ENCODE measurements at regions of chr14 and their contacts with region 1.

Region 1: GRCh38 chr14:94423453-94424056 is 29.0 kb downstream of the SERPINA11 start:
- DNase-seq: peak; percentile 56
- H3K4me3 ChIP-seq: no peak overlapping the region
- H3K27ac ChIP-seq: no peak overlapping the region
- H3K4me1 ChIP-seq: no peaks in the 10 kb centered on the region
- CTCF ChIP-seq: peak; percentile 90

Region 2: DNA sequence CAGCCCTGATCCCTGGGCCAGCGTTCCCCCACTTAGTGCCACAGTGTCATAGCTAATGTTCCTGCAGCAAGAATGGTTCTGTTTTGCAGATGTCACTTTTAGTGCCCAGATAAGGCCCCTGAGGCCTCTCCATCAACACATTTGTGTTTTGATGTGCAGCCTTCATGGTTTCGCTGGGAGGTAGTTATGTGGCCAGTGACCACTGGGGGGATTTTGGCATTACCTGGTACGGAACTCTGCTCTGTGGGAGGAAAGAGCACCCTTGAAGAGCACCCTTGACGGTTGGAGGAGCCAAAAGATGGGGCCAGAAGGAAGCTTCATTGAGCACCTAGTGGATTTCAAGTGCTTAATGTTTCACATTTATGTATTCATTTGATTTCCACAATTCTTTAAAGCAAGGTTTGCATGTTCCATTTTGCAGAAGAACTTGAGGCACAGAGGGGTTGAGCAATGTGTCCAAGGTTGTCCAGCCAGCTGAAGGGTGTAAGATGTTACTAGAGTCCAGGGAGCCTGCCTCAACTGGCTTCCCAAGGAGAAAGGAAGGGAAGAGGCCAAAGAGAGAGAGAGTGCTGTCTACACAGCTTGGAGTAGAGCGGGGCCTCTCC is 16.0 kb after region 1 on chr14:
- CTCF ChIA-PET with region 1: no interaction called
- POLR2A ChIA-PET with region 1: no interaction called
- intact Hi-C with region 1: no loop called
- DNase-seq: no peak
- H3K4me3 ChIP-seq: no peak overlapping the region
- H3K27ac ChIP-seq: no peak overlapping the region
- H3K4me1 ChIP-seq: no peaks in the 10 kb centered on the region
- CTCF ChIP-seq: peak; percentile 41; the same call in 1 of the 2 replicates

Region 3: DNA sequence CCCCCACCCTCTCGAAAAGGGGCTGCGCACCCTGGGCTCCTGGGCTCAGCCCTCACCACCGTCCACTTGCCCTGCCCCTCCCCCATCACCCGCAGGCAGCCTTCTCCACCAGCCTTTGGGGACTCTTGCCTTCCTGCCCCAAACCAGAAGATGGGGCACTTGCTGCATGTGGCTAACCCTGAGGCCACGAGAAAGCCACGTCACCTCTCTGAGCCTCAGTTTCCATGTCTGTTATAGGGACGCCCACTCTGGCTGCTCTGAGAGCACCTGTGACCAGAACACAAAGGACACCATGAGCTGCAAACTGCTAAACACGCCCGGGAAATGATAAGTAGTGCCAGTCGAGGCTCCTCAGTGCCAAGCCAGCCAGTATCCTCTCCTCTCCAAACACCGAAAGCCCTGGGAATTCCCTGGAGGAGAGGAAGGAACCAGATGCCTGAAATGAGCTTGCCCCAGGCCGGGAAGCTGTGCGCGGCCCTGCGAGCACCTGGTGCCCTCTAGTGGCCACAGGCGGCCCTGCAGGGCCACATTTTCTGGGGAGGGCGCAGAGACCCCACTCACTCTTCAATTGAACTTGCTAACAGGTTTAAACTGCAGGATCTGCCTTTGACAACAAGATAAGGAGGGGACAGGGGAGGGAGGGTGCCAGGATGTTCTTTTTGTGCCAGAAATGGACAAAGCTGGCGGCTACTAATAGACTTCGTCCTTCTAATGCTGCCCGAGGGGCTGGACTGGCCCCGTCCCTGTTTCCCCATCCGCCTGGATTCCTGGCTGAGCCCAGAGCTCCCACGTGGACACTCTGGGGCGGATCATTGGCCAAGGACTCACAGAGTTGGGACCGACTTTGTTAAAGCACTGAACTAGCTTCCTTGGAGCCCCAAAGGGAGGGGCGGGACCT is 62.6 kb after region 1 on chr14:
- CTCF ChIA-PET with region 1: no interaction called
- POLR2A ChIA-PET with region 1: no interaction called
- intact Hi-C with region 1: loop called (anchors 2 kb)
- DNase-seq: peak; percentile 34
- H3K4me3 ChIP-seq: no peak overlapping the region
- H3K27ac ChIP-seq: no peak overlapping the region
- H3K4me1 ChIP-seq: no peaks in the 10 kb centered on the region
- CTCF ChIP-seq: peak; percentile 98